GM12878 (cell line): ENCODE measurements at regions of chr21 and their contacts with region 1.

Region 1: GRCh38 chr21:42381334-42381984 is 14.4 kb downstream of the TMPRSS3 start:
- DNase-seq: no peak
- ATAC-seq: peak; percentile 62
- H3K4me3 ChIP-seq: no peak overlapping the region
- H3K27ac ChIP-seq: no peak overlapping the region
- H3K4me1 ChIP-seq: 0 out of 2 replicates have a peak, but pooled peaks cover 3% of the 10 kb centered on the region
- H3K27me3 ChIP-seq: no peaks in the 10 kb centered on the region
- CTCF ChIP-seq: peak; percentile 38 to 59 (median 49); a peak in 5 of 6 replicates
- EP300 ChIP-seq: no peak
- POLR2A ChIP-seq: no peak
- RAD21 ChIP-seq: peak; percentile 58

Region 2: DNA sequence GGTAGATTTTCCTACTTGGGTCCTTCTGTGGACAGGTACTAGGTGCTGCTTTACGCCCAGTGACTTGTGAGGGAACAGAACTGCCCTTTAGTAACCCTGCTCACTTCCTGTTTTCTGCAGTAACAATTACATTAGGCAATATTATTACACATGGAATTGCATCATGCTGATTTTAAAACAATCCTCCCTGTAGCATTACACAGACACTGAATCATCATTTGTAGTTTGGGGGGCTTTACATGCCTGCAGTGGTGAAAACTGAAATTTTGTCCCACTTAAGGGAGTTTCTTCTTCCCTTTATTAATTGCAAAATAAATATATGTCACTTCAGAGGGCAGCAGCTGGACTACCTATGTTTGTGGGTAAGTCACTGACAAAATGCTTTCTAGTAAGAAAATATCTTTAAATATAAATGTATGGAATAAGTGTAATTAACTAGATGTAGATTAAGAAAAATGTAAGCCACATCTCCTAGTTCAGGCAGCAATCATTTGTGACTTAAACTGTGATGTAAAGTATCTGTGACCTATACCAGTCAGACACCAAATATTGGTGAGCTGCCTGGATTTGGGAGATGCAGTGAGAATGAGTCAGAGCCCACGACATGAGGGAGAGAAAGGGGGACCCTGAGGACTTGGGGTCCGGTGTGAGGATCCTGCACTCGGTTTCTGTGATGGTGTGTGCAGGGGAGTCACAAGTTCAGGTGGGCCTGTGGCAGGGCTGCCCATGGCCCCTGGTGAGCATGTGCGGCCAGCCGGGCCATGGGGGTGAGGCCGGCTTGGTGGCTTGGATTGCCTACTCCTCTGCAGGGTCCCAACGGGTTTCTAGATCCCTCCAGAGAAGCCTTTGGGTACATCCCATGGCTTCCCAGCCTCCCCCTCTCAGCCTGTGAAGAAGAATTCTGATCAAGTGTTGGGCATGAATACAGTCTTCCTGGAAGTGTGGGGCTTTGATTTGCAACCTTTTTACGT is 181.7 kb before region 1 on chr21:
- CTCF ChIA-PET with region 1: no interaction called
- POLR2A ChIA-PET with region 1: no interaction called
- RAD21 ChIA-PET with region 1: no interaction called
- SMC1A ChIA-PET with region 1: no interaction called
- in situ Hi-C with region 1: no loop called
- intact Hi-C with region 1: no loop called
- DNase-seq: peak; percentile 8
- ATAC-seq: peak; percentile 98
- H3K4me3 ChIP-seq: no peak overlapping the region
- H3K27ac ChIP-seq: no peak overlapping the region
- H3K4me1 ChIP-seq: peaks cover 4% of the 10 kb centered on the region; the same call in 1 of the 2 replicates
- H3K27me3 ChIP-seq: no peaks in the 10 kb centered on the region
- CTCF ChIP-seq: no peak
- EP300 ChIP-seq: peak in 1 of 2 experiments; percentile 25; a peak in 1 of 4 replicates
- POLR2A ChIP-seq: no peak
- RAD21 ChIP-seq: no peak

Region 3: GRCh38 chr21:42248783-42249597 is 132.5 kb before region 1 on chr21:
- CTCF ChIA-PET with region 1: no interaction called
- POLR2A ChIA-PET with region 1: no interaction called
- RAD21 ChIA-PET with region 1: no interaction called
- SMC1A ChIA-PET with region 1: no interaction called
- in situ Hi-C with region 1: no loop called
- intact Hi-C with region 1: no loop called
- DNase-seq: peak; percentile 76
- ATAC-seq: peak; percentile 99
- H3K4me3 ChIP-seq: peak overlapping the region; percentile 1; the same call in 1 of the 2 replicates
- H3K27ac ChIP-seq: peak overlapping the region; percentile 9; the same call in 1 of the 2 replicates
- H3K4me1 ChIP-seq: peaks cover 15% of the 10 kb centered on the region
- H3K27me3 ChIP-seq: no peaks in the 10 kb centered on the region
- CTCF ChIP-seq: no peak
- EP300 ChIP-seq: peak; percentile 44 to 86; a peak in 3 of 4 replicates
- POLR2A ChIP-seq: no peak
- RAD21 ChIP-seq: 0 out of 2 replicates have a peak, but pooled peaks have one; percentile 7

Region 4: GRCh38 chr21:42392721-42393442 is 11.4 kb after region 1 on chr21:
- CTCF ChIA-PET with region 1: interaction called, 8 read pairs
- POLR2A ChIA-PET with region 1: interaction called, 4 read pairs
- RAD21 ChIA-PET with region 1: interaction called, 6 read pairs
- SMC1A ChIA-PET with region 1: interaction called, 19 read pairs
- in situ Hi-C with region 1: no loop called
- intact Hi-C with region 1: no loop called
- DNase-seq: peak; percentile 96
- ATAC-seq: peak; percentile 91
- H3K4me3 ChIP-seq: peak overlapping the region; percentile 33; the same call in 1 of the 2 replicates
- H3K27ac ChIP-seq: peak overlapping the region; percentile 91
- H3K4me1 ChIP-seq: peaks cover 53% of the 10 kb centered on the region
- H3K27me3 ChIP-seq: no peaks in the 10 kb centered on the region
- CTCF ChIP-seq: no peak
- EP300 ChIP-seq: peak in 1 of 2 experiments; percentile 13; a peak in 1 of 4 replicates
- POLR2A ChIP-seq: no peak
- RAD21 ChIP-seq: peak; percentile 34

Region 5: GRCh38 chr21:42400525-42400924 is 19.1 kb after region 1 on chr21:
- CTCF ChIA-PET with region 1: interaction called, 6 read pairs
- POLR2A ChIA-PET with region 1: interaction called, 5 read pairs
- RAD21 ChIA-PET with region 1: interaction called, 5 read pairs
- SMC1A ChIA-PET with region 1: interaction called, 4 read pairs
- in situ Hi-C with region 1: no loop called
- intact Hi-C with region 1: loop called (anchors 2 kb)
- DNase-seq: peak; percentile 68
- ATAC-seq: peak; percentile 82
- H3K4me3 ChIP-seq: no peak overlapping the region
- H3K27ac ChIP-seq: peak overlapping the region; percentile 2; the same call in 1 of the 2 replicates
- H3K4me1 ChIP-seq: peaks cover 10% of the 10 kb centered on the region; the same call in 1 of the 2 replicates
- H3K27me3 ChIP-seq: no peaks in the 10 kb centered on the region
- CTCF ChIP-seq: no peak
- EP300 ChIP-seq: no peak
- POLR2A ChIP-seq: no peak
- RAD21 ChIP-seq: no peak

Region 6: DNA sequence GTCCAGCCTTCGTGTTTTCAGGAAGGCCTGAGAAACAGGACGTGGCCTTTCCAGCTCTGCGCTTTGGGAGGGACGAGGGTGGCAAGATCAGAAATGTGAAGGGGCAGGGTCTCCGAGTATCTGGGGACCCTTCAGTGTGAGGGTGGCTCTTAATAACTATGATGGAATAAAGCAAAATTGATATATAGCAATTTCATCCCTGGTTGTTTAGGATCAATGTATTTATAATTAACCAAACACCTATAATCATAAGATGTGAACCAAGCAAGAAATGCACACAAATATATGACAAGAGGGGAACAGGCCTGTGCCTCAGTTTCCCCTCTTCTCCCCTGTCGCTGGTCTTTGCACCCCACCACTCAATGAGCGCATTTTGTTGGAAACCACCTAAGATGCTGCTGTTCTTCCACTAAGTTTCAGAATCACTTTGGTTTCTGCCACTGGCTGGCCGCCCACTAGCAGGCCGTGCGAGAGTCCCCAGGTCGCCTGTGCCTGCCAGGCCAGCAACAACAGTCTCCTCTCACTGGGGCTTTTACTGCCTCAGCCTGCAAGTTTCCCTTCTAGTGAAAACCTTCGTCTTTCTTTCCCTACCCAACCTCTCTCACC is 58.8 kb after region 1 on chr21:
- CTCF ChIA-PET with region 1: no interaction called
- POLR2A ChIA-PET with region 1: interaction called, 5 read pairs
- RAD21 ChIA-PET with region 1: no interaction called
- SMC1A ChIA-PET with region 1: interaction called, 3 read pairs
- in situ Hi-C with region 1: loop called (anchors 5 kb)
- intact Hi-C with region 1: loop called (anchors 5 kb)
- DNase-seq: peak; percentile 70
- ATAC-seq: peak; percentile 96
- H3K4me3 ChIP-seq: no peak overlapping the region
- H3K27ac ChIP-seq: peak overlapping the region; percentile 59
- H3K4me1 ChIP-seq: peaks cover 18% of the 10 kb centered on the region
- H3K27me3 ChIP-seq: no peaks in the 10 kb centered on the region
- CTCF ChIP-seq: no peak
- EP300 ChIP-seq: peak; percentile 56 to 81; a peak in 3 of 4 replicates
- POLR2A ChIP-seq: no peak
- RAD21 ChIP-seq: peak; percentile 31; the same call in 1 of the 2 replicates

Region 7: DNA sequence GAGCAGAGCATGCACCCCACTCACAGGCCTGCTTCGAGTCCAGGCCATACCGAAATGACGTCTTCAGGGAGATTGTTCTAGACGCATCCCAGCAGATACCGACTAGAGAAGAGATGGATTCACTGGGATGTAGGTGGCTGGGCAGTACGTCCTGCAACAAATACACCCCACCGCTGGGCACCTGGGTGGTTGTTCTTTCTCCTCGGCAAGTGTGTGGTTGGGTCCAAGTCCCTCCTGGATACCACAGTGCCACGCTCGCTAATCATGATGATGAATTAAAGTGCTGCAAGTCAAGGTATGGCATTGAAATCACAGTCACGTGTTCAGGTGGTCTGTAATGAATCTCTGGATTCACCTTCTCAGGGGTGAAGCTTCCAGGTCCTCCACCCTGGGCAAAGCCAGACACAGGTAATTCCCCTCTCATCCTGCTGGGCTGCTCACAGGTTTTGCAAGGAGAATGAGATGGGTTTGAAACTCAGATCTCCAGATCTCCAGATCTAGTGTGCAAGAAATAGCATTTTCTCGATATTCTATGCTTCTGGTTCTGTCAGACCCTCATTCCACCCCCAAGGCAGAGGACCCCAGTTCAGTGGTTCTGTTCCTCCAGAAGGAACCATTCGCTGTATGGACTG is 68.0 kb after region 1 on chr21:
- CTCF ChIA-PET with region 1: interaction called, 5 read pairs
- POLR2A ChIA-PET with region 1: no interaction called
- RAD21 ChIA-PET with region 1: interaction called, 3 read pairs
- SMC1A ChIA-PET with region 1: interaction called, 4 read pairs
- in situ Hi-C with region 1: loop called (anchors 5 kb)
- intact Hi-C with region 1: loop called (anchors 5 kb)
- DNase-seq: no peak
- ATAC-seq: peak; percentile 16
- H3K4me3 ChIP-seq: no peak overlapping the region
- H3K27ac ChIP-seq: peak overlapping the region; percentile 43
- H3K4me1 ChIP-seq: peaks cover 17% of the 10 kb centered on the region
- H3K27me3 ChIP-seq: no peaks in the 10 kb centered on the region
- CTCF ChIP-seq: no peak
- EP300 ChIP-seq: no peak
- POLR2A ChIP-seq: no peak
- RAD21 ChIP-seq: no peak